PC-9 (cell line): ENCODE measurements at regions of chr11 and their contacts with region 1.

Region 1: DNA sequence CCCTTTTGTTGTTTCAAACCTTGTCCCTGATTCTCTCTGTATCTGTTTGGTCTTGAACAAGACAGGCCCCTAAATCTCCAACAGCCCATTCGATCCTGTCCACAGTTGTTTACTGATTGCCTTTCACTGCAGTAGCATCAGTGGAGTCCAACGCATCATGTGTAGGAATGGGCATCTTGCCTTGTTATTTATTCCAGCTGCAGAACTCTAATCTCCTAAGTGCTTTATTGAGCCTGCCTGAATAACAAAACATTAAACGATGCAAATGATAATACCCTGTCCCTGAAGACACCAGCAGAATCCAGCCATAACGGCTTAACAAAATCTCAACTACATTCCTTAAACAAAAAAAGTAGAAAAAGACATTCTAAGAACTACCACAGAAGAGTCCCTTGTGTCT is 50.1 kb downstream of the SLC35F2 start:
- DNase-seq: no peak
- H3K4me3 ChIP-seq: no peak overlapping the region
- H3K27ac ChIP-seq: no peak overlapping the region
- H3K4me1 ChIP-seq: no peaks in the 10 kb centered on the region
- H3K27me3 ChIP-seq: no peaks in the 10 kb centered on the region
- CTCF ChIP-seq: no peak

Region 2: GRCh38 chr11:107840129-107840484 is 31.6 kb after region 1 on chr11:
- CTCF ChIA-PET with region 1: interaction called, 12 read pairs
- POLR2A ChIA-PET with region 1: no interaction called
- intact Hi-C with region 1: no loop called
- DNase-seq: no peak
- H3K4me3 ChIP-seq: peak overlapping the region; percentile 28; the same call in 1 of the 2 replicates
- H3K27ac ChIP-seq: peak overlapping the region; percentile 93
- H3K4me1 ChIP-seq: peaks cover 75% of the 10 kb centered on the region
- H3K27me3 ChIP-seq: no peaks in the 10 kb centered on the region
- CTCF ChIP-seq: no peak

Region 3: GRCh38 chr11:107882095-107882820 is 73.7 kb after region 1 on chr11:
- CTCF ChIA-PET with region 1: no interaction called
- POLR2A ChIA-PET with region 1: no interaction called
- intact Hi-C with region 1: no loop called
- DNase-seq: peak; percentile 25 to 81
- H3K4me3 ChIP-seq: no peak overlapping the region
- H3K27ac ChIP-seq: peak overlapping the region; percentile 4; the same call in 1 of the 2 replicates
- H3K4me1 ChIP-seq: peaks cover 13% of the 10 kb centered on the region
- H3K27me3 ChIP-seq: no peaks in the 10 kb centered on the region
- CTCF ChIP-seq: no peak